ENCODE measurements at regions of chr10 and their contacts with region 1.

Region 1: GRCh38 chr10:119750391-119751230 is 24.8 kb downstream of the INPP5F start:
- DNase-seq: peak; percentile 70
- H3K4me3 Mint-ChIP-seq: no peak overlapping the region
- H3K27ac Mint-ChIP-seq: no peak overlapping the region
- H3K4me1 Mint-ChIP-seq: peaks cover 12% of the 10 kb centered on the region
- H3K27me3 Mint-ChIP-seq: no peaks in the 10 kb centered on the region

Region 2: DNA sequence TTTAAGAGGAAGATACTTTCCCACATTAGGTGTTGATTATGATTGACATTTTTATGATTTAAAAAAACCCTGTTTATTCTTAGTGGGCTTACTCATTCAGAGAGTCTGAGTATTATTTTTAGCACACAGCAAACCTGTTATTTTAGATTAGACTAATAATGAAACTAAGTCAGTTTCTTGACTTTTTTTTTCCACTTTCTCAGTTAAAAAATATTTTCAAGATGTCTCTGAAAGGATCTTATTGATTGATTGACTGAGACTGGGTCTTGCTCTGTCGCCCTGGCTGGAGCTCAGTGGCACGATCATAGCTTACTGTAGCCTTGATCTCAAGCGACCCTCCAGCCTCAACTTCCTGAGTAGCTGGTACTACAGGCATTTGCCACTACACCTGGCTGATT is 45.2 kb before region 1 on chr10:
- CTCF ChIA-PET with region 1: interaction called, 10 read pairs
- POLR2A ChIA-PET with region 1: no interaction called
- intact Hi-C with region 1: no loop called
- DNase-seq: peak; percentile 51
- H3K4me3 Mint-ChIP-seq: peak overlapping the region; percentile 55
- H3K27ac Mint-ChIP-seq: peak overlapping the region; percentile 92
- H3K4me1 Mint-ChIP-seq: peaks cover 79% of the 10 kb centered on the region
- H3K27me3 Mint-ChIP-seq: no peaks in the 10 kb centered on the region

Region 3: DNA sequence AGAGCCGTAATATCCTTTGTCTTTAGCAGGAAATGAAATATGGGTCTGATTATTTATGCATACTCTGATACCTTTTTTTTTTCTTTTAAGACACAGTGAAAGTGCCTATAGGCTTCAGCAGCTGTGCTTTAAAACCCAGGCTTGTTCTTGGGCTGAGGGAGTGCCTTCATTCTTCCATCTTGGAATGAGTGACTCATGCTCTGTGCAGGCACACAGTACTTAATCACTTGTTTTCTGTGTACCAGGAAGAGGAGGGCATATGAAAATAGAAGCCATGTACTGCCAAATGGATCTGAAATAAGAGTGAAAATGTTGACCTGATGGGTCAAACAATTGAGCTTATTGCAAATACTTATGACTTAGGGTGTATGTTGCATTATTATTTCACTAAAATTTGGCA is 12.8 kb before region 1 on chr10:
- CTCF ChIA-PET with region 1: interaction called, 13 read pairs
- POLR2A ChIA-PET with region 1: no interaction called
- intact Hi-C with region 1: no loop called
- DNase-seq: peak; percentile 33
- H3K4me3 Mint-ChIP-seq: no peak overlapping the region
- H3K27ac Mint-ChIP-seq: peak overlapping the region; percentile 33
- H3K4me1 Mint-ChIP-seq: peaks cover 40% of the 10 kb centered on the region
- H3K27me3 Mint-ChIP-seq: no peaks in the 10 kb centered on the region

Region 4: DNA sequence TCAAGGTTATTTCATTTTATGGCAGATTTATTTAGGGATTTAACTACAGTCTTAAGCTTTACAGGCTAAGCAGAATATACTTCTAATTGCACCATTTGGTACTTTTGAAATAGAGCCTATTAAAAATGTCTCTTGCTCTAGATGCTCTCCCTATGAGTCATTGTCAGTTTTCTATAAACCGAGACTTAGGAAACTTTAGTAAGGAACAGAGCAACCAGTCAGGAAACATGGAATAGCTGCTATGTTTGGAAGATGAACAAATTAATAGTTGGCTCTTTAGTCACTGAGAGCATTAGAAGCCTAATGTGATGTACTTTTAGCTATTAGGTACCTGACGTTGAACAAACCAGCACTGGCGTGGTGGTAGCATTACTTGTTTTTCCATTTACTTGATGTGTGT is 10.5 kb after region 1 on chr10:
- CTCF ChIA-PET with region 1: interaction called, 44 read pairs
- POLR2A ChIA-PET with region 1: no interaction called
- intact Hi-C with region 1: no loop called
- DNase-seq: no peak
- H3K4me3 Mint-ChIP-seq: no peak overlapping the region
- H3K27ac Mint-ChIP-seq: no peak overlapping the region
- H3K4me1 Mint-ChIP-seq: peaks cover 11% of the 10 kb centered on the region
- H3K27me3 Mint-ChIP-seq: no peaks in the 10 kb centered on the region

Region 5: DNA sequence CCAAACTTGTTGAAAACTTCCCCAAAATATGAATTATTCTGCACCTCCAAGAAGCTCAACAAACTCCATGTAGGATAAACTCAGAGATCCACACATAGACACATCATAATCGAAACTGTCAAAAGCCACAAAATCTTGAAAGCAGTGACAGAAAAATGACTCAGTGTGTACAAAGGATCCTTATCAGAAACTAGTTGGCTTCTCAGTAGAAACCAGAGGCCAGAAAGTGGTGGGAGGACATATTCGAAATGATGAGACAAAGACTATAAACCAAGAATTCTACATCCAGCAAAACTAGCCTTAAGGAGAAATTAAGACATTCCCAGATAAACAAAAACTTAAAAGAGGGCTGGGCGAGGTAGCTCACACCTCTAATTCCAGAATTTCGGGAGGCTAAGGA is 83.6 kb after region 1 on chr10:
- CTCF ChIA-PET with region 1: interaction called, 13 read pairs
- POLR2A ChIA-PET with region 1: no interaction called
- intact Hi-C with region 1: loop called (anchors 2 kb)
- DNase-seq: no peak
- H3K4me3 Mint-ChIP-seq: no peak overlapping the region
- H3K27ac Mint-ChIP-seq: peak overlapping the region; percentile 52
- H3K4me1 Mint-ChIP-seq: peaks cover 43% of the 10 kb centered on the region
- H3K27me3 Mint-ChIP-seq: no peaks in the 10 kb centered on the region

Region 6: DNA sequence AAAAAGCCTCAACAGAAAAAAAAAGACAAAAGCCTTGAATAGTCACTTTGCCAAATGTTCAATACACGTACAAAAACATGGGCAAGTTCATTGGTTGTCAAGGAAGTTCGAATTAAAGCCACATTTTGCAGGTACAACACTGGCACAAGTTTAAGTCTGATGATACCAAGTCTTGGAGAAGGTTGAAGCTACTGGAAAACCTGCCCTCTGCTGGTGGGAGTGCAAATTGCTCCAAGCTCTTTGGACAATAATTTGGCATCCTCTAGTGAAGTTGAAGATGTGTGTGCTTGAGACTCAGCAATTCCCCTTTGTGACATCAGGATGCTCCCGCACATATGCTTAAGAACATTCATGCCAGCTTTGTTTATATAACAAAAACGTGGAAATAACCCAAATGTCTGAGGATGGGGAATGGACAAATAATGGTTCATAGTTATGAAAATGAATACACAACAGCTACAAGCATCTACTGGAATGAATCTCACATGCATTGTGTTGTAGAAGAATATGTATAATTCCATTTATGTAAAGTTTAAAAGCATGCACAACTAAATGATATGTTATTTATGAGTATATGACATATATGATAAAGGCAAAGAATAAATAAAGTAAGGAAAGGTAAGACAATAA is 586.4 kb after region 1 on chr10:
- CTCF ChIA-PET with region 1: interaction called, 12 read pairs
- POLR2A ChIA-PET with region 1: no interaction called
- intact Hi-C with region 1: loop called (anchors 2 kb)
- DNase-seq: peak; percentile 72
- H3K4me3 Mint-ChIP-seq: no peak overlapping the region
- H3K27ac Mint-ChIP-seq: no peak overlapping the region
- H3K4me1 Mint-ChIP-seq: no peaks in the 10 kb centered on the region
- H3K27me3 Mint-ChIP-seq: peaks cover 13% of the 10 kb centered on the region